Body of pancreas (tissue), 4 donors: ENCODE measurements at regions of chr1 and their contacts with region 1.

Region 1: DNA sequence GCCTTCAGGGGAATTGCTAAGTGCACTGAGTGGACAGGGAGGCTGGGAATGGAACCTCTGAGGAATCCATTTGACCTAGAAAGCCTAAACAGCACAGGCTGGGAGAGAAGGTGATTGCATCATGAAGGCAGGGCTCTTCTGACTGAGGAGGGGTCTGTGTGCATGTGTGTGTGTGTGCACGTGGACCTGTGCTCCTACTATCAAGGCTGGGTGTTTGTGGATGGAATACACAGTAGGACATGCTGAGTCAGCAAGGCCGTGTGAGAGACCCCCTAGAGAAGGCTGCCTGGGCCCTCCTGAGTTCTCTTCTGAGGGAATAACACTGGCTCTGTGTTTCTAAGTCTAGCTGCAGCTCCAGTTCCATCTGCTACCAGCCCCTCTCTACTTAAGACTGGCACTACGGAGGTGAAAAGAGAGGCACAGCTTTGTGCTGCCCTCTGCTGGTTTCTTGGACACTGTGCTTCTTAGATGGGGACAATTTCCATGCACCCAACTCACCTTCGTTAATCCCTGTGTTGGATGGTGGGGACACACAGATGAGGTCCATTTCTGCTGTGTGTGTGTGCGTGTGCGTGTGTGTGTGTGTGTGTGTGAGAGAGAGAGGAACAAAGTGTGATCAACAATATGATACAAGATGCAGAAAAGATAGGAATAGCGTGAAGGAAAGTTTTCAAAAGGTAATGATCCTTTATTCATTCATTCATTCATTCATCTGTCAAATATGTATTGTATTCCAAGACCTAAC is 6.2 kb upstream of the EFCAB14 start:
- DNase-seq: peak; percentile 78 to 83 (median 82)
- ATAC-seq: peak; percentile 95
- H3K4me3 ChIP-seq: no peak overlapping the region
- H3K27ac ChIP-seq: no peak overlapping the region
- H3K4me1 ChIP-seq: no peaks in the 10 kb centered on the region
- H3K27me3 ChIP-seq: peaks cover 0 to 3% of the 10 kb centered on the region in 2 donors
- CTCF ChIP-seq: peak; percentile 78 to 94 (median 91)
- POLR2A ChIP-seq: no peak

Region 2: GRCh38 chr1:46622344-46622743 is 102.8 kb before region 1 on chr1:
- intact Hi-C with region 1: loop called (anchors 10 kb)
- DNase-seq: peak; percentile 40 to 60 (median 53)
- ATAC-seq: peak; percentile 63
- H3K4me3 ChIP-seq: no peak overlapping the region
- H3K27ac ChIP-seq: no peak overlapping the region
- H3K4me1 ChIP-seq: peaks cover 3% of the 10 kb centered on the region
- H3K27me3 ChIP-seq: no peaks in the 10 kb centered on the region
- CTCF ChIP-seq: peak; percentile 16 to 65 (median 44)
- POLR2A ChIP-seq: no peak

Region 3: DNA sequence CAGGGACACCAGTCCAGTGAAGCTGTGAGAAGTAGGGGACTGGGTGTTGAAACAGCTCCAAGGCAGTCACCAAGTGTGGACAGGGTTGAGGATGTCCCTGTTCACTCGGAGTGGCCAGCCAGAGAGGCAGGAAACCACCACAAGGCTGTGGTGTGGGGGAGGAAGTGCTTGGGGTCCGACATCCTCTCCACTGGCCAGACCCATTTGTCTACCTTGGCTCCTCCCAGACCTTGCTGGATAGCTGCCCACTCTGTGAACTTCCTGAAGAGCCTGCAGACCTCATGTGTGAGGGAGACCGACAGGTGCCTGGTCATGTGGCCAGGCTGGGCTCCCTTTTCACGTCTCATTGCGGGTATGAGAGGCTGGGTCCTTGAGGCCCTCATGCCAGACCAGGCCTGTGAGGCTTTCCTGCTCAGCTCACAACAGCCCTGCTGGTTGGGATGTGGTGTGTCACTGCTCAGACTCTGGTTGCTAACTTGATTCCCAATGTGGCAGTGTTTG is 95.4 kb after region 1 on chr1:
- intact Hi-C with region 1: no loop called
- DNase-seq: no peak
- ATAC-seq: peak; percentile 35
- H3K4me3 ChIP-seq: no peak overlapping the region
- H3K27ac ChIP-seq: no peak overlapping the region
- H3K4me1 ChIP-seq: no peaks in the 10 kb centered on the region
- H3K27me3 ChIP-seq: no peaks in the 10 kb centered on the region
- CTCF ChIP-seq: no peak
- POLR2A ChIP-seq: no peak